ENCODE measurements at regions of chr9 and their contacts with region 1.

Region 1: DNA sequence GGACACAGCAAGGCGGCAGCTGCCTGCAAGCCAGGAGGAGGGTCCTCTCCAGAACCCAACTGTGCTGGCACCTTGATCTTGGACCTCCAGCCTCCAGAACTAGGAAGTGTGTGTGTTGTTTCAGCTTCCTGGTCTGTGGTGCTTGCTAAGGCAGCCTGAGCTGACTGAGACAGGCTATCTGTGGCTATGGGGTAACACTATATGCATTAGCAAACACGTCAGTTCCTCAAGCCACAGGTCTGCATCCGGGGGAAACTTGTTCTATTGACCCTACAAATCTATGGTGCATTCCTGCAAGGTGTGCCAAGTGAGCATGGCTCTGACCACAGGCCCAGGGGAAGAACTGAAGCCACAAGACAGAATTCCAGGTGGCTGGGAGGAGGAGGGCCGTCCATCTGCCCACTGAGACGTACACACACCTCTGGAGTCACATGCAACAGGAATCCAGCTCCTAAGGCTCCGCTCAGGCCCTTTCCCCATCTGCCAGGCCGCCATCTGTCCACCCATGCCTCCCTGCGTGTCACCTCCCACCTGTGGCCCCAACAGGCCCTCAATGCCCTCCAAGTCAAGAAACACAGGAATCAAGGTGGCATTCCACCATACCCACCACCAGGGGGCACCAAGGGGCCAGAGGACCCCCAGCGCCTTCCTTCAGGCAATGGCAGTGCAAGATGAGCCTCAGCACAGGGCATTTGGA is 174.9 kb downstream of the ROR2 start:
- DNase-seq: no peak
- ATAC-seq: peak; percentile 85
- H3K4me3 ChIP-seq: no peak overlapping the region
- H3K27ac ChIP-seq: no peak overlapping the region
- H3K4me1 ChIP-seq: peaks cover 19% of the 10 kb centered on the region
- H3K27me3 ChIP-seq: no peaks in the 10 kb centered on the region
- CTCF ChIP-seq: peak; percentile 84

Region 2: GRCh38 chr9:91681461-91682305 is 93.5 kb before region 1 on chr9:
- intact Hi-C with region 1: no loop called
- DNase-seq: peak; percentile 89
- ATAC-seq: peak; percentile 98
- H3K4me3 ChIP-seq: no peak overlapping the region
- H3K27ac ChIP-seq: no peak overlapping the region
- H3K4me1 ChIP-seq: peaks cover 10% of the 10 kb centered on the region
- H3K27me3 ChIP-seq: peaks cover 9% of the 10 kb centered on the region
- CTCF ChIP-seq: peak; percentile 91

Region 3: DNA sequence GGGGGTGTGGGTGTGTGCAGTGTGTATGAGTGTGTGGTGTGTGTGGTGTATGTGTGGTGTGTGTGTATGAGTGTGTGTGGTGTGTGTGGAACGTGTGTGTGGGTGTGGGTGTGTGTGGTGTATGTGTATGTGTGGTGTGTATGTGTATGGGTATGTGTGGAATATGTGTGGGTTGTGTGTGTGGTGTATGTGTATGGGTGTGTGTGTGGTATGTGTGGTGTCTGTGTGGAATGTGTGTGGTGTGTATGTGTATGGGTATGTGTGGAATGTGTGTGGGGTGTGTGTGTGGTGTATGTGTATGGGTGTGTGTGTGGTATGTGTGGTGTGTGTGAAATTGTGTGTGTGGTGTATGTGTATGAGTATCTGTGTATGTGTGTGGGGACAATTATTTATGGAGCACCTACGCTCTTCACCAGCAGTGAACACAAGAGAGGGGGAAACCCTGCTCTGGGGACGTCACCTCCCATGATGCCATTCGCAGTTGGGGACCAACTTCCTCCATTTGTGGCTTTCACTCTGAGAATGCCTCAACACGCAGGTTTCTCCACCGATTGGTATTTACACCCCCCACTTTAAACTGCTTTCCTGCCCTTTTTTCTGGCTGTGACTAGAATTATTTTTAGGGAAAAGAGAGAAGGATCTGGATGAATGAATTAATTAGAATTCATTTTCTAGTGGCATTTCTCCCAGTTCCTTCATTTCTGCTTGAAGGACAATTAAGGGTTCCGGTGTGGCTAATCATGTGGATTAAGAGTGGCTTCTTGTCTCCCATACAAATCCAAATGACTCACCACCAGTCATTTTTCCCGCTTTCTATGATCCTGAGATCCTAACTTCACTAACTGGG is 63.2 kb before region 1 on chr9:
- intact Hi-C with region 1: no loop called
- DNase-seq: no peak
- ATAC-seq: peak; percentile 79
- H3K4me3 ChIP-seq: no peak overlapping the region
- H3K27ac ChIP-seq: no peak overlapping the region
- H3K4me1 ChIP-seq: no peaks in the 10 kb centered on the region
- H3K27me3 ChIP-seq: peaks cover 7% of the 10 kb centered on the region
- CTCF ChIP-seq: no peak

Region 4: GRCh38 chr9:91824601-91825305 is 49.6 kb after region 1 on chr9:
- intact Hi-C with region 1: no loop called
- DNase-seq: no peak
- ATAC-seq: peak; percentile 65
- H3K4me3 ChIP-seq: no peak overlapping the region
- H3K27ac ChIP-seq: peak overlapping the region; percentile 51
- H3K4me1 ChIP-seq: no peaks in the 10 kb centered on the region
- H3K27me3 ChIP-seq: no peaks in the 10 kb centered on the region
- CTCF ChIP-seq: no peak

Region 5: GRCh38 chr9:91914405-91914804 is 139.2 kb after region 1 on chr9:
- intact Hi-C with region 1: no loop called
- DNase-seq: no peak
- ATAC-seq: no peak
- H3K4me3 ChIP-seq: no peak overlapping the region
- H3K27ac ChIP-seq: no peak overlapping the region
- H3K4me1 ChIP-seq: no peaks in the 10 kb centered on the region
- H3K27me3 ChIP-seq: no peaks in the 10 kb centered on the region
- CTCF ChIP-seq: no peak

Region 6: DNA sequence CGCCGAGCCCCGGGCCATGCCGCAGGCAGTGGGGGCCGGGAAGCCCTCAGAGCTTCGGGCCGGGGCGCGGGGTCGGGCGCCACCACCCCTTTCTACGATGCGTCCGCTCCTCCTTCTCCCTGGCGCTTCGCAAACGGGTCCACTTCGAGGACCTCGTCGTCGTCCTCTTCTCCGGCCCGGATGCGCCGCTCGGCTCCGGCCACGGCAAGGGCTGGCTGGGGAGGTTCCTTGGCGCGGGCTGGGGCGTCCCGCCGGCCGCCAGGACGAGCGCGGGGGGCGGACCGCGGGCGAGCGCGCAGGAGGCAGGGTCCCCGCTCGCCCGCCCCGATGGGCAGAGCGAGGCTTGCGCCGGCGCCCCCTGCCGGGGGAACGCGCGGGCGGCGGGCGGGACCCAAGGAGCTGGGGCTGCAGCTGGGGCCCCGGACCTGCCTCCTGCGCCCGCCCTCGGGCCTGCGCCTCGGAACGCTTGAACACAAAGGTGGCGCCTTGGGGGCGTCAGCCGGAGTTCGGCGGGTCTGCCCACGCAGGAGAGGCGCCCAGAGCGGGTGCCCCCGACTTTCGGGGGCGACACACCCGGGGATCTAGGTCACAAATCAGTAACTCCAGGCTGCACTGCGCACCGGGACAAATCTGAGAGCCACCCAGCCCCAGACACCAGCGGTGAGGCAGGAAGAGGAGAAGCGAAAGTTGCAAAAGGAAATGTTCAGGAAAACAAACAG is 174.9 kb after region 1 on chr9 and contains the start of gene ROR2:
- intact Hi-C with region 1: loop called (anchors 10 kb)
- DNase-seq: peak; percentile 77
- ATAC-seq: peak; percentile 86
- H3K4me3 ChIP-seq: peak within 1 kb of the TSS; percentile 51
- H3K27ac ChIP-seq: peak within 1 kb of the TSS; percentile 63
- H3K4me1 ChIP-seq: peaks cover 10% of the 10 kb centered on the region
- H3K27me3 ChIP-seq: peaks cover 64% of the 10 kb centered on the region
- CTCF ChIP-seq: peak; percentile 42
- total RNA-seq, gene ROR2: 5.5 TPM

Measured in upper lobe of right lung (tissue), 1 donor.